ENCODE measurements at regions of chr7 and their contacts with region 1.

Region 1: GRCh38 chr7:56063882-56064625 is at the start of gene SUMF2:
- DNase-seq: peak; percentile 92
- H3K4me3 ChIP-seq: peak within 1 kb of the TSS; percentile 78
- H3K27ac ChIP-seq: peak within 1 kb of the TSS; percentile 86
- H3K4me1 ChIP-seq: peaks cover 20% of the 10 kb centered on the region
- H3K27me3 ChIP-seq: no peaks in the 10 kb centered on the region
- CTCF ChIP-seq: no peak
- total RNA-seq, gene SUMF2: 157 and 159 TPM in 2 replicates

Region 2: GRCh38 chr7:55477781-55478374 is 586.2 kb before region 1 on chr7:
- CTCF ChIA-PET with region 1: no interaction called
- POLR2A ChIA-PET with region 1: no interaction called
- intact Hi-C with region 1: no loop called
- DNase-seq: no peak
- H3K4me3 ChIP-seq: no peak overlapping the region
- H3K27ac ChIP-seq: no peak overlapping the region
- H3K4me1 ChIP-seq: no peaks in the 10 kb centered on the region
- H3K27me3 ChIP-seq: no peaks in the 10 kb centered on the region
- CTCF ChIP-seq: no peak

Region 3: DNA sequence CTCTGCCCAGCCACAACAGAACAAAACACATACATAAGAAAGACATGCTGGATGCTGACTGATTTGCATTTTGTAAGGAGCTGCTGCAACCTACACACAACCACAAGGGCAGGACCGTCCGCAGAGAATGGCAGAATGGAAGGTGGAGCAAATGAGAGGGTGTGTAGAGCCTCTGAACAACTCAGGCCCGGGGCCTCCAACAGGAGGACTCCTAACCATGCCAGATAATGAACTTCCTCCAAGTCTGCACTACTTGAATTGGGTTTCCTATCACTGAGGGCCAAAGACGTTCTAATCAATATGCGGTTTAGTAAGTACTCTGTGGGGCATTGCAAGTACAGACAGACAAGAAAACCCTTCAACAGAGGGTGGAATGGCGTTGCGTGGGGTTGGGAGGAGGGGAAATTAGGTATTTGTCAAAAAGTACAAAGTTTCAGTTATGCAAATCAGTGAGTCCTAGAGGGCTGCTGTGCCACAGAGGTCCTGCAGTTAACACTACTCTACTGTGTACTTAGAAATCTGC is 506.3 kb before region 1 on chr7:
- CTCF ChIA-PET with region 1: no interaction called
- POLR2A ChIA-PET with region 1: interaction called, 30 read pairs
- intact Hi-C with region 1: no loop called
- DNase-seq: no peak
- H3K4me3 ChIP-seq: no peak overlapping the region
- H3K27ac ChIP-seq: no peak overlapping the region
- H3K4me1 ChIP-seq: peaks cover 33% of the 10 kb centered on the region
- H3K27me3 ChIP-seq: no peaks in the 10 kb centered on the region
- CTCF ChIP-seq: no peak

Region 4: GRCh38 chr7:56250149-56250548 is 186.1 kb after region 1 on chr7:
- CTCF ChIA-PET with region 1: no interaction called
- POLR2A ChIA-PET with region 1: no interaction called
- intact Hi-C with region 1: no loop called
- DNase-seq: no peak
- H3K4me3 ChIP-seq: no peak overlapping the region
- H3K27ac ChIP-seq: no peak overlapping the region
- H3K4me1 ChIP-seq: no peaks in the 10 kb centered on the region
- H3K27me3 ChIP-seq: no peaks in the 10 kb centered on the region
- CTCF ChIP-seq: no peak